CD4-positive, alpha-beta T cell (primary cell): ENCODE measurements at regions of chr4 and their contacts with region 1.

Region 1: GRCh38 chr4:83639849-83640493 is 104.1 kb downstream of the GPAT3 start:
- DNase-seq: peak in 13 of 14 experiments; percentile 2 to 83 (median 44)
- ATAC-seq: peak; percentile 64
- H3K4me3 ChIP-seq: no peak overlapping the region
- H3K4me3 Mint-ChIP-seq: no peak overlapping the region
- H3K27ac ChIP-seq: no peak overlapping the region
- H3K27ac Mint-ChIP-seq: no peak overlapping the region
- H3K4me1 ChIP-seq: no peaks in the 10 kb centered on the region
- H3K4me1 Mint-ChIP-seq: peaks cover 4% of the 10 kb centered on the region
- H3K27me3 ChIP-seq: no peaks in the 10 kb centered on the region
- H3K27me3 Mint-ChIP-seq: peaks cover 11% of the 10 kb centered on the region
- CTCF ChIP-seq: peak; percentile 92

Region 2: DNA sequence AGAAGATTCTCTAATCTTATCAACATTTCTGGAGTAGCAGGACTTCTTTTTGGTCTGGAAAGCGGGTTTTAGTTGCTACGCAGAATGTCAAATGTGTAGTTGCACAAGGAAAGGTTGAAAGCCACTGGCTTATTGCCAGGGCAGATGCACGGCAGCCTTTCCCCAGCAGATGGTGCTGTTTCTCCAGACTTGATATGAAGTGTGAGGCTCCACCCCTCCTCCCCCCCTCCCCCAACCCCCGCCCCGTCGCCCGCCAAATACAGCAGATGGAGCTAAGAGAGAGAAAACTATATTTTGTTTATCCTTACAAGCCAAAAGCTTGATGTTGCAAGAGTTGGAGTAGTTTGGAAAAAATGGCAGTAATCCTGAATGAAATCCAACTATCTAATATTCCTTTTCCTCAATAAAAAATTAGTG is 1177.5 kb before region 1 on chr4:
- CTCF ChIA-PET with region 1: no interaction called
- POLR2A ChIA-PET with region 1: no interaction called
- intact Hi-C with region 1: loop called (anchors 2 to 10 kb)
- DNase-seq: peak; percentile 68 to 90 (median 80)
- ATAC-seq: peak; percentile 99
- H3K4me3 ChIP-seq: no peak overlapping the region
- H3K4me3 Mint-ChIP-seq: no peak overlapping the region
- H3K27ac ChIP-seq: no peak overlapping the region
- H3K27ac Mint-ChIP-seq: no peak overlapping the region
- H3K4me1 ChIP-seq: no peaks in the 10 kb centered on the region
- H3K4me1 Mint-ChIP-seq: peaks cover 6% of the 10 kb centered on the region
- H3K27me3 ChIP-seq: no peaks in the 10 kb centered on the region
- H3K27me3 Mint-ChIP-seq: no peaks in the 10 kb centered on the region
- CTCF ChIP-seq: peak; percentile 71

Region 3: GRCh38 chr4:83083925-83084475 is 556.0 kb before region 1 on chr4:
- CTCF ChIA-PET with region 1: no interaction called
- POLR2A ChIA-PET with region 1: no interaction called
- intact Hi-C with region 1: no loop called
- DNase-seq: peak in 12 of 14 experiments; percentile 28 to 90 (median 66)
- ATAC-seq: peak; percentile 98
- H3K4me3 ChIP-seq: no peak overlapping the region
- H3K4me3 Mint-ChIP-seq: peak overlapping the region; percentile 60
- H3K27ac ChIP-seq: peak overlapping the region; percentile 22 to 69
- H3K27ac Mint-ChIP-seq: peak overlapping the region; percentile 99
- H3K4me1 ChIP-seq: peaks cover 28% of the 10 kb centered on the region
- H3K4me1 Mint-ChIP-seq: peaks cover 57% of the 10 kb centered on the region
- H3K27me3 ChIP-seq: no peaks in the 10 kb centered on the region
- H3K27me3 Mint-ChIP-seq: no peaks in the 10 kb centered on the region
- CTCF ChIP-seq: peak; percentile 53

Region 4: DNA sequence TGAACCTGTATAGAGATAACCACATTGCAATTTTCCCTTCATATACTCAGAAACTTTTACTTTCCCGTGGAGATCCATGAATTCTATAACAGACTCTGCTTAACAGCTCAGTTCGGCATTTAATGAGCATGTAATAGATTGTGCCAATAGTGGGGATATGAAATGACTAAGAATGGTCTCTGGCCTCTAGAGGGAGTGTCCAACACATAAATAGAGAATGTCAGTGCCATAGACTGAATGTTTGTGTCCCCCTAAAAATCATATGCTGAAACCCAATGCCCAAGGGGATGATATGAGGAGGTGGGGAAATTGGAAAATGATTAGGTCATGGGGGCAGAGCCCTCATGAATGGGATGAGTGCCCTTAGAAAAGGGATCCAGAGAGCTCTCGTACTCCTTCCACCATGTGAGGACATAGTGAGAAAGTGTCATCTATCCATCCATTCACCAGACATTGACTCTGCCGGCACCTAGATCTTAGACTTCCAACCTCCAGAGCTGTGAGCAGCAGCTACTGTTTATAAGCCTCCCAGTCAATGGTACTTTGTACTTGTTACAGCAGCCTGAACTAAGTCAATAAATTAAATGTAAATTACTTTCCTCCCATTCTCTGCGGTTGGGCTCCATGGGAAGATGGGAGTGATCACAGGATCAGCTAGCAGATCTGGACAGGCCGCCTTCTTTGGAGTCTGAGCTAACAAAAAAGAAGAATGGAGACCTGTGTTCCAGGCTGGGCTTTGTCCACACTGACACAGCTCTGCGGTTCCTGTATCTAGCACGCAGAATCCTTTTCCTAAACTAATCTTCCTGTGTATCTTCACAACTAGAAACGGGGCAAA is 277.3 kb before region 1 on chr4:
- CTCF ChIA-PET with region 1: no interaction called
- POLR2A ChIA-PET with region 1: no interaction called
- intact Hi-C with region 1: loop called in 1 of 2 experiments (anchors 5 kb)
- DNase-seq: peak in 2 of 14 experiments; percentile 9 to 17
- ATAC-seq: no peak
- H3K4me3 ChIP-seq: no peak overlapping the region
- H3K4me3 Mint-ChIP-seq: no peak overlapping the region
- H3K27ac ChIP-seq: no peak overlapping the region
- H3K27ac Mint-ChIP-seq: no peak overlapping the region
- H3K4me1 ChIP-seq: no peaks in the 10 kb centered on the region
- H3K4me1 Mint-ChIP-seq: no peaks in the 10 kb centered on the region
- H3K27me3 ChIP-seq: no peaks in the 10 kb centered on the region
- H3K27me3 Mint-ChIP-seq: no peaks in the 10 kb centered on the region
- CTCF ChIP-seq: no peak

Region 5: GRCh38 chr4:83490876-83491450 is 149.0 kb before region 1 on chr4:
- CTCF ChIA-PET with region 1: interaction called, 3 read pairs
- POLR2A ChIA-PET with region 1: no interaction called
- intact Hi-C with region 1: loop called (anchors 1 kb)
- DNase-seq: peak in 4 of 14 experiments; percentile 40 to 68 (median 53)
- ATAC-seq: peak; percentile 83
- H3K4me3 ChIP-seq: no peak overlapping the region
- H3K4me3 Mint-ChIP-seq: no peak overlapping the region
- H3K27ac ChIP-seq: no peak overlapping the region
- H3K27ac Mint-ChIP-seq: no peak overlapping the region
- H3K4me1 ChIP-seq: no peaks in the 10 kb centered on the region
- H3K4me1 Mint-ChIP-seq: no peaks in the 10 kb centered on the region
- H3K27me3 ChIP-seq: no peaks in the 10 kb centered on the region
- H3K27me3 Mint-ChIP-seq: no peaks in the 10 kb centered on the region
- CTCF ChIP-seq: peak; percentile 85

Region 6: DNA sequence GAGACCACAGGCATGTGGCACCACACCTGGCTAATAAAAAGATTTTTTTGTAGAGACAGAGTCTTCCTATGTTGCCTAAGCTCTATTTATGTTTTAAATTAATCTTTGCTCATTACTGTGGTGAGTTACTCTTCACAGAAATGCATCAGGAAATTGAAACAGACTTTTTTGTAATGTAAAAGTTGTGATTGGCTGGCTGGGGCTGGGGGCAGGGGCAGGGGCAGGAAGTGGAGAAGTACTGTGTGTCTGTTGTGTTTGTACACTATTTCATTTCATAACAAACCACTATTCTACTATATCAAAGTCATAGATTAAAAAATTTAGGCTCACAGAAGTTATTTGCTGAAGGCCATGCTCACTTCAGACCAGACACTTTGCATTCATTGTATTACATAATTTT is 136.0 kb before region 1 on chr4:
- CTCF ChIA-PET with region 1: interaction called, 8 read pairs
- POLR2A ChIA-PET with region 1: no interaction called
- intact Hi-C with region 1: loop called (anchors 1 kb)
- DNase-seq: peak in 8 of 14 experiments; percentile 17 to 71 (median 26)
- ATAC-seq: peak; percentile 85
- H3K4me3 ChIP-seq: no peak overlapping the region
- H3K4me3 Mint-ChIP-seq: no peak overlapping the region
- H3K27ac ChIP-seq: peak overlapping the region; percentile 52 to 68
- H3K27ac Mint-ChIP-seq: peak overlapping the region; percentile 74
- H3K4me1 ChIP-seq: peaks cover 17% of the 10 kb centered on the region
- H3K4me1 Mint-ChIP-seq: peaks cover 22% of the 10 kb centered on the region
- H3K27me3 ChIP-seq: no peaks in the 10 kb centered on the region
- H3K27me3 Mint-ChIP-seq: no peaks in the 10 kb centered on the region
- CTCF ChIP-seq: no peak

Region 7: GRCh38 chr4:84529169-84529751 is 889.3 kb after region 1 on chr4:
- CTCF ChIA-PET with region 1: interaction called, 4 read pairs
- POLR2A ChIA-PET with region 1: no interaction called
- intact Hi-C with region 1: loop called (anchors 1 to 2 kb)
- DNase-seq: peak in 3 of 14 experiments; percentile 29 to 33 (median 30)
- ATAC-seq: no peak
- H3K4me3 ChIP-seq: no peak overlapping the region
- H3K4me3 Mint-ChIP-seq: no peak overlapping the region
- H3K27ac ChIP-seq: no peak overlapping the region
- H3K27ac Mint-ChIP-seq: no peak overlapping the region
- H3K4me1 ChIP-seq: no peaks in the 10 kb centered on the region
- H3K4me1 Mint-ChIP-seq: no peaks in the 10 kb centered on the region
- H3K27me3 ChIP-seq: no peaks in the 10 kb centered on the region
- H3K27me3 Mint-ChIP-seq: peaks cover 28% of the 10 kb centered on the region
- CTCF ChIP-seq: peak; percentile 80

Region 8: DNA sequence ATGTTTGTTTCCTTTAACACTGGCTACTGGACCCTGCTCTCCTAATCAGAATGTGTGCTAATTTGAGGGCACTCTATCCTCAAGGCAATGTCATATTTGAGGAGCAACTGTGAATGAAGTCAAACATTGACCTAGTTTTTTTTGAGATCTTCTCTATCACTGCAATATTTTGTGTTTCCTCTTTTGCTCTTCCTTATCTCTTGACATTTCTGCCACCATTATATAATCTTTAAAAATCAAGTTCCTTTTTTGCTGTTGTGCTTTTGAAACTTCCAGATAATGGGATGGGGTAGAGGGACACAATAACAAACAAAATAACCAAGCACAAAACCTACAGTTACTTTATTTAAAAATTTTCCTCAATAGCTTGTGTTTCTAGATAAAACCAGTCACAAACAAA is 1333.9 kb after region 1 on chr4:
- CTCF ChIA-PET with region 1: interaction called, 3 read pairs
- POLR2A ChIA-PET with region 1: no interaction called
- intact Hi-C with region 1: loop called in 1 of 2 experiments (anchors 2 kb)
- DNase-seq: no peak
- ATAC-seq: no peak
- H3K4me3 ChIP-seq: no peak overlapping the region
- H3K4me3 Mint-ChIP-seq: no peak overlapping the region
- H3K27ac ChIP-seq: no peak overlapping the region
- H3K27ac Mint-ChIP-seq: no peak overlapping the region
- H3K4me1 ChIP-seq: no peaks in the 10 kb centered on the region
- H3K4me1 Mint-ChIP-seq: no peaks in the 10 kb centered on the region
- H3K27me3 ChIP-seq: peaks cover 3% of the 10 kb centered on the region in 2 experiments
- H3K27me3 Mint-ChIP-seq: peaks cover 18% of the 10 kb centered on the region
- CTCF ChIP-seq: no peak